ENCODE measurements at regions of chr2 and their contacts with region 1.

Region 1: GRCh38 chr2:30894498-30895119 is 87.4 kb upstream of the CAPN13 start:
- DNase-seq: no peak
- H3K4me3 ChIP-seq: no peak overlapping the region
- H3K27ac ChIP-seq: no peak overlapping the region
- H3K4me1 ChIP-seq: no peaks in the 10 kb centered on the region; a peak in 2 of 7 replicates
- H3K27me3 ChIP-seq: no peaks in the 10 kb centered on the region
- CTCF ChIP-seq: no peak
- EP300 ChIP-seq: no peak
- POLR2A ChIP-seq: no peak
- RAD21 ChIP-seq: no peak

Region 2: DNA sequence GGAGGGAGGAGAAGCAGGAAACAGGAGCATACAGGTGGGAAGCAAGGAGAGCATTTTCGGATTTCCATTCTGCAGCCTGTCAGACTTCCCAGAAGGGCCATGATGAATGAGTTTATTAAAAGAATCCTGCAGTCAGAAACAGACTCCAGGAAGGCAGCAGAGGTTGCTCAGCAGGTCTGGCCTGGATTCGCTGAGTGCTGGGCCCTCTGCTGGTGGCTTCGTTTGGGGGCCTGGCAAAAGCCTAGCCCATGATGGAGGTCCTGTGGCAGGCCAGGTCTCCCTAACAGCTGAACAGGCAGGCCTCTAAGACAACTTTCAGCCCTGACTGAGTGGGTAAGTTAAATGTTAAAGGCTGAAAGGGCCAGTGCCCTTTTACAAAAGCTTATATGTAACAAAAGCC is 20.9 kb after region 1 on chr2:
- CTCF ChIA-PET with region 1: interaction called, 19 read pairs
- POLR2A ChIA-PET with region 1: interaction called, 3 read pairs
- DNase-seq: peak; percentile 17 to 72
- H3K4me3 ChIP-seq: no peak overlapping the region
- H3K27ac ChIP-seq: no peak overlapping the region
- H3K4me1 ChIP-seq: 0 out of 7 replicates have a peak, but pooled peaks cover 0 to 2% (median 0%) of the 10 kb centered on the region in 4 experiments
- H3K27me3 ChIP-seq: no peaks in the 10 kb centered on the region
- CTCF ChIP-seq: peak; percentile 75 to 88 (median 79)
- EP300 ChIP-seq: no peak
- POLR2A ChIP-seq: no peak
- RAD21 ChIP-seq: peak; percentile 74 to 81